CD4-positive, alpha-beta T cell (primary cell): ENCODE measurements at regions of chr9 and their contacts with region 1.

Region 1: DNA sequence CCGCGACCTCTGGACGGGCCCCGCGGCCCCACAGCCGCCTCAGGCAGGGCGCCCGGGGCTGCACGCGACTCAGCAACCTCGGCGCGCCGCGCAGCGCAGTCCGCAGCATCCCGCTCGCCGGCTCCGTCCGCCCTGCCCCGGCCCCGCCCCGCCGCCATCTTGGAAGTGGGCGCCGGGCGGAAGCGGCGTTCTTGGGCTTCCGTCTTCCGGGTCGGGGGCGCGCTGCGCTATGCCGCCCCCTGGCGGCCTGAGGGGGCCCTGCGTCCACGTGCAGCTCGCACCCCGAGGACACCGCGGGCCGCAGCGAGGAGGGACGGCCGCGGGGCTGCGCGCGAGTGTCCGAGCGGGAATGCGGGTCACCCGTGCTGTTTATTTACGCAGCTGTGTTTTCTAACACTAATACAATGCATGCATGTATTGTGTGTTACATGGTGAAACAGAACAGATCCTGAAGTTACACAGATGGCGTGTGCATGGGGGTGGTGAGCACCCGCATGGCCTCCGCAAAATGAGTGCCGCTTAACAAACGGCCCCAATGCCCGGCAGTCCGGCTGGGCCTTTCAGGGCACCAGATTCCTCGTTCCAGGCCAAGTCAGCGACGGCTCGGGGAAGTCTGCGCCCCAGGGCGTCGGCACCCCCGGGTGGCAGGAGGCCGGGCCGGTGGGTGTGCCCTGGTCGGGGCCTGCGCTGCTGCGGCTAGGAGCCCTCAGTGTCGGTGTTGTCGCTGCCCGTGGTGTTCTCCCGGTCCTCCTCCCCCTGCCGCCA is at the start of gene DNLZ:
- DNase-seq: peak; percentile 74 to 95 (median 84)
- ATAC-seq: peak; percentile 75
- H3K4me3 ChIP-seq: peak within 1 kb of the TSS; percentile 68
- H3K4me3 Mint-ChIP-seq: peak within 1 kb of the TSS; percentile 86
- H3K27ac ChIP-seq: peak within 1 kb of the TSS; percentile 67 to 74
- H3K27ac Mint-ChIP-seq: peak within 1 kb of the TSS; percentile 62
- H3K4me1 ChIP-seq: peaks cover 19% of the 10 kb centered on the region
- H3K4me1 Mint-ChIP-seq: peaks cover 5% of the 10 kb centered on the region
- H3K27me3 ChIP-seq: no peaks in the 10 kb centered on the region
- H3K27me3 Mint-ChIP-seq: no peaks in the 10 kb centered on the region
- CTCF ChIP-seq: peak; percentile 96
- total RNA-seq, gene DNLZ: 15.4 to 17.0 TPM

Region 2: GRCh38 chr9:135907431-135908092 is 456.2 kb before region 1 on chr9 and contains the start of gene CAMSAP1:
- CTCF ChIA-PET with region 1: no interaction called
- POLR2A ChIA-PET with region 1: no interaction called
- intact Hi-C with region 1: loop called in 1 of 2 experiments (anchors 2 kb)
- DNase-seq: peak; percentile 89 to 99 (median 96)
- ATAC-seq: peak; percentile 88
- H3K4me3 ChIP-seq: peak within 1 kb of the TSS; percentile 79
- H3K4me3 Mint-ChIP-seq: peak within 1 kb of the TSS; percentile 94
- H3K27ac ChIP-seq: peak within 1 kb of the TSS in 1 of 2 donors; percentile 61
- H3K27ac Mint-ChIP-seq: peak within 1 kb of the TSS; percentile 78
- H3K4me1 ChIP-seq: peaks cover 46% of the 10 kb centered on the region
- H3K4me1 Mint-ChIP-seq: peaks cover 57% of the 10 kb centered on the region
- H3K27me3 ChIP-seq: no peaks in the 10 kb centered on the region
- H3K27me3 Mint-ChIP-seq: no peaks in the 10 kb centered on the region
- CTCF ChIP-seq: no peak
- total RNA-seq, gene CAMSAP1: 16.8 to 18.2 TPM

Region 3: GRCh38 chr9:136245219-136246150 is 118.3 kb before region 1 on chr9 and contains the start of gene QSOX2:
- CTCF ChIA-PET with region 1: no interaction called
- POLR2A ChIA-PET with region 1: no interaction called
- intact Hi-C with region 1: loop called (anchors 1 to 2 kb)
- DNase-seq: peak; percentile 73 to 94 (median 84)
- ATAC-seq: peak; percentile 81
- H3K4me3 ChIP-seq: peak within 1 kb of the TSS; percentile 63
- H3K4me3 Mint-ChIP-seq: peak within 1 kb of the TSS; percentile 94
- H3K27ac ChIP-seq: peak within 1 kb of the TSS; percentile 15 to 20
- H3K27ac Mint-ChIP-seq: peak within 1 kb of the TSS; percentile 76
- H3K4me1 ChIP-seq: peaks cover 39% of the 10 kb centered on the region
- H3K4me1 Mint-ChIP-seq: peaks cover 41% of the 10 kb centered on the region
- H3K27me3 ChIP-seq: no peaks in the 10 kb centered on the region
- H3K27me3 Mint-ChIP-seq: no peaks in the 10 kb centered on the region
- CTCF ChIP-seq: no peak
- total RNA-seq, gene QSOX2: 14.4 TPM

Region 4: DNA sequence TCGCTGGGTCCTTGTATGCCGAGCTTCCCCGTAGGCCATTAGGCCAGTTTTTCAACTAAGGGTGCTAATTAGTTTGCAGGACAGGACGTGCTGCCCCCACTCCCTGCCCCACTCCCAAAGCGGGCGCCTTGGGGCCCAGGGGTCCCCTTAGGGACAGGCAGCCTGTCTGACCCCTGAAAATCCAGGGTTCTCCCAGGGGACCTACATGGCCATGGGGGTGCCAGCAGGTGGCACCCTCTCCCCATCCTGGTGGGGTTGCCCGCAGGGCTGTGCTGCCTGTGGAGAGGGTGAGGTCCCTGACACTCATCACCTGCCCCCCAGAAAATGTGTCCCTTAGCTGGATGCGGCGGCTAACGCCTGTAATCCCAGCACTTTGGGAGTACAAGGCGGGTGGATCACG is 51.4 kb before region 1 on chr9:
- CTCF ChIA-PET with region 1: interaction called, 5 read pairs
- POLR2A ChIA-PET with region 1: no interaction called
- intact Hi-C with region 1: loop called in 1 of 2 experiments (anchors 1 kb)
- DNase-seq: peak in 12 of 14 experiments; percentile 15 to 69 (median 40)
- ATAC-seq: peak; percentile 70
- H3K4me3 ChIP-seq: no peak overlapping the region
- H3K4me3 Mint-ChIP-seq: no peak overlapping the region
- H3K27ac ChIP-seq: no peak overlapping the region
- H3K27ac Mint-ChIP-seq: no peak overlapping the region
- H3K4me1 ChIP-seq: peaks cover 9% of the 10 kb centered on the region
- H3K4me1 Mint-ChIP-seq: no peaks in the 10 kb centered on the region
- H3K27me3 ChIP-seq: peaks cover 20 to 22% of the 10 kb centered on the region in 2 experiments
- H3K27me3 Mint-ChIP-seq: peaks cover 4% of the 10 kb centered on the region
- CTCF ChIP-seq: peak; percentile 28

Region 5: GRCh38 chr9:136410500-136411287 is 46.9 kb after region 1 on chr9 and contains the starts of genes ENTR1 and PMPCA:
- CTCF ChIA-PET with region 1: interaction called, 6 read pairs
- POLR2A ChIA-PET with region 1: interaction called, 8 read pairs
- intact Hi-C with region 1: loop called in 1 of 2 experiments (anchors 1 kb)
- DNase-seq: peak; percentile 89 to 98 (median 94)
- ATAC-seq: peak; percentile 85
- H3K4me3 ChIP-seq: peak within 1 kb of the TSS; percentile 95
- H3K4me3 Mint-ChIP-seq: peak within 1 kb of the TSS; percentile 91
- H3K27ac ChIP-seq: peak within 1 kb of the TSS; percentile 87 to 95
- H3K27ac Mint-ChIP-seq: peak within 1 kb of the TSS; percentile 91
- H3K4me1 ChIP-seq: peaks cover 47% of the 10 kb centered on the region
- H3K4me1 Mint-ChIP-seq: peaks cover 42% of the 10 kb centered on the region
- H3K27me3 ChIP-seq: no peaks in the 10 kb centered on the region
- H3K27me3 Mint-ChIP-seq: no peaks in the 10 kb centered on the region
- CTCF ChIP-seq: no peak
- total RNA-seq, gene ENTR1: 37.7 to 43.2 TPM
- total RNA-seq, gene PMPCA: 107 to 109 TPM

Region 6: GRCh38 chr9:136482793-136483588 is 119.2 kb after region 1 on chr9 and contains the start of gene SEC16A:
- CTCF ChIA-PET with region 1: interaction called, 3 read pairs
- POLR2A ChIA-PET with region 1: interaction called, 5 read pairs
- intact Hi-C with region 1: loop called in 1 of 2 experiments (anchors 1 kb)
- DNase-seq: peak; percentile 98 to 100 (median 100)
- ATAC-seq: peak; percentile 72
- H3K4me3 ChIP-seq: peak within 1 kb of the TSS; percentile 63
- H3K4me3 Mint-ChIP-seq: peak within 1 kb of the TSS; percentile 100
- H3K27ac ChIP-seq: peak within 1 kb of the TSS; percentile 97 to 99
- H3K27ac Mint-ChIP-seq: peak within 1 kb of the TSS; percentile 99
- H3K4me1 ChIP-seq: peaks cover 36% of the 10 kb centered on the region
- H3K4me1 Mint-ChIP-seq: peaks cover 49% of the 10 kb centered on the region
- H3K27me3 ChIP-seq: no peaks in the 10 kb centered on the region
- H3K27me3 Mint-ChIP-seq: no peaks in the 10 kb centered on the region
- CTCF ChIP-seq: no peak
- total RNA-seq, gene SEC16A: 73.0 to 75.0 TPM